CD8-positive, alpha-beta T cell (primary cell): ENCODE measurements at regions of chr21 and their contacts with region 1.

Region 1: DNA sequence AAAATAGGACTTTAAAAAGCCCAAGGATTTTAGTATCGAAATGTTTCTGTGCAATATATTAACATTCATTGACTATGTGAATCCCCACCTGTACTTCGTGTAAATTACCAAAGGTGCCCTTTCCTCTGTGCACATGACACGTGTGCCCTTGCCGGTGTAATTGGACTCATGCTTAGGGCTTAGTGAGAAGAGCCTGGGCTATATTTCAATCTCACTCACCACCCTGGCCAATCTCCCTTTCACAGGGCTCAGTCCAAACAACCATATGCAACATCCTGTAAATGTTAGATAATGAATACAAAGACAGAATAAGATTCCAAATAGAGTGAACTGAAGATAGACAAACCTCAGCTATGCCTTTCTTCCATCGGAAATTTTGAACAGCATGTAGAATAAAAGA is 564.3 kb downstream of the USP25 start:
- DNase-seq: no peak
- ATAC-seq: no peak
- H3K4me3 ChIP-seq: no peak overlapping the region
- H3K4me3 Mint-ChIP-seq: no peak overlapping the region
- H3K27ac ChIP-seq: no peak overlapping the region
- H3K27ac Mint-ChIP-seq: no peak overlapping the region
- H3K4me1 ChIP-seq: no peaks in the 10 kb centered on the region
- H3K4me1 Mint-ChIP-seq: no peaks in the 10 kb centered on the region
- H3K27me3 ChIP-seq: no peaks in the 10 kb centered on the region
- H3K27me3 Mint-ChIP-seq: no peaks in the 10 kb centered on the region
- CTCF ChIP-seq: no peak

Region 2: DNA sequence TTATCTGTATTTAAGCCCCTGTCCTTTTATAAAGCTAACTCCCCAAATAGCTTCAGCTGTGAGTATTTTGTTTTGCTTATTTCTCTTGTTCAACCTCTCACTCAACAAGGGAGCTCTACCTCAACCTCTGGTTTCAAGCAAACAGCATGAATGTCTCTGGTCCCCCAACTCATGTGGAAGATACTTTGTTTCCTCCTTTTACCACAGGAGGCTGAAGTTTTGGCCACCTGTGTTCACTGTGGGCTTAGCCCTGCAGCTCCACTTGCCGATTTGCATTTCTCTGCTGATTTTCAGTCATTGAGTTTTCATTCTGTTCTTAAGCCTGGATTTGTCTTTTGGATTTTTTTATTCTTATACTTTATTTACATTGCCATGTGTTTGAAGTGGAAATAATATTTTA is 48.8 kb after region 1 on chr21:
- CTCF ChIA-PET with region 1: no interaction called
- POLR2A ChIA-PET with region 1: no interaction called
- intact Hi-C with region 1: no loop called
- DNase-seq: no peak
- ATAC-seq: no peak
- H3K4me3 ChIP-seq: no peak overlapping the region
- H3K4me3 Mint-ChIP-seq: no peak overlapping the region
- H3K27ac ChIP-seq: no peak overlapping the region
- H3K27ac Mint-ChIP-seq: no peak overlapping the region
- H3K4me1 ChIP-seq: no peaks in the 10 kb centered on the region
- H3K4me1 Mint-ChIP-seq: no peaks in the 10 kb centered on the region
- H3K27me3 ChIP-seq: no peaks in the 10 kb centered on the region
- H3K27me3 Mint-ChIP-seq: no peaks in the 10 kb centered on the region
- CTCF ChIP-seq: no peak

Region 3: GRCh38 chr21:16357994-16358393 is 63.9 kb after region 1 on chr21:
- CTCF ChIA-PET with region 1: no interaction called
- POLR2A ChIA-PET with region 1: no interaction called
- intact Hi-C with region 1: no loop called
- DNase-seq: no peak
- ATAC-seq: no peak
- H3K4me3 ChIP-seq: no peak overlapping the region
- H3K4me3 Mint-ChIP-seq: no peak overlapping the region
- H3K27ac ChIP-seq: no peak overlapping the region
- H3K27ac Mint-ChIP-seq: no peak overlapping the region
- H3K4me1 ChIP-seq: no peaks in the 10 kb centered on the region
- H3K4me1 Mint-ChIP-seq: no peaks in the 10 kb centered on the region
- H3K27me3 ChIP-seq: no peaks in the 10 kb centered on the region
- H3K27me3 Mint-ChIP-seq: no peaks in the 10 kb centered on the region
- CTCF ChIP-seq: no peak

Region 4: DNA sequence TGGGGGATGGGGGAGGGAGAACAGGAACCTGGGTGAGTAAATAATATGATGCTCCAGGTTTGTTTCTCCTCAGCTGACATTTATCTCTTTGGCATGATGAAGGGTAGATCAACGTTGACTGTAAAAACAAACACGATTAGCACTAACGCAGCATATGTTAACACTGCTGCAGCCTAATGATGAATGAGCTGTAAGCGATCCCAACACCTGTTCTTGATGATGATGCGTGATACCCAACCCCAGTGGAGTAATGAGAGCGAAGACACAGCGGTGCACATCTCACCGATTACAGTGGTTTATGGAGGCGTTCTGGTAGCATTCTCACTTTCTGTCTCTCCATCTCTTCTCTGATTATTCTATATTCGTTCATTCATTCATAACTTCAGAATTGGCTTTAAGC is 76.1 kb after region 1 on chr21:
- CTCF ChIA-PET with region 1: no interaction called
- POLR2A ChIA-PET with region 1: no interaction called
- intact Hi-C with region 1: loop called in 1 of 2 experiments (anchors 1 kb)
- DNase-seq: no peak
- ATAC-seq: no peak
- H3K4me3 ChIP-seq: no peak overlapping the region
- H3K4me3 Mint-ChIP-seq: no peak overlapping the region
- H3K27ac ChIP-seq: no peak overlapping the region
- H3K27ac Mint-ChIP-seq: no peak overlapping the region
- H3K4me1 ChIP-seq: no peaks in the 10 kb centered on the region
- H3K4me1 Mint-ChIP-seq: no peaks in the 10 kb centered on the region
- H3K27me3 ChIP-seq: no peaks in the 10 kb centered on the region
- H3K27me3 Mint-ChIP-seq: no peaks in the 10 kb centered on the region
- CTCF ChIP-seq: no peak